Naive thymus-derived CD4-positive, alpha-beta T cell (primary cell): ENCODE measurements at regions of chr17 and their contacts with region 1.

Region 1: DNA sequence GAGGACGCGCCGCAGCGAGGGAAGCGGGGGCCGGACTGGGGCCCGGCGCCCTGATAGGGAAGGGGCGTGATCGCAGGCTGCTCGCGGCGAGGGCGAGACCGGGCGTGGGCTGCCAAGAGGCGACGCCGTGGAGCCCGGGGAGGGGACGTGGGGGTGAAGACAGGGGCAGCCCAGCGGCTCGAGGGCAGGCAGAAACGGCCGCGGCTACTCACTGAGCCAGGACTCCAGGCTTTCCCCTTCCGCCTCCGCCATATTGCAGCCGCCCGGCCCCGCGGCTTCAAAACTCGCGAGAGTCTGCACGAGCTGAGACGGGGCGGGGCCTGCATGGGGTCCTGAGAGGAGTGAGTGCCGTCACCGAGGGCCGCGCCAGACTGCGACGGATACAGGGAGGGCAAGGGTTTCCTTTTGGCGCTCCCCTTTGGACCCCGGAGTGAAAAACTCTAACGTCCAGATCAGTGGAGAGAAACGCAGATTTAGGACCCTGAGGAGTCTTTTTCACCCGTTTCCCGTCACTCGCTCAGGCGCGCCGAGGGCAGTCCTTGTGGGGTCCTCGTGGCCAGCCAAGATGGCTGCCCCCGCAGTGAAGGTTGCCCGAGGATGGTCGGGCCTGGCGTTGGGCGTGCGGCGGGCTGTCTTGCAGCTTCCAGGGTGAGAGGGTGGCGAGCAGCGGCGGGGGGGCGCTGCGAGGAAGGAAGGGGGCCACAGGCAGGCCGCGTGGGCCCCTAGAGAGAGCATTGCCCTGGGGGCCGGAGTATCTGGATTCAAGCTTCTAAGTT is at the starts of genes GGA3 and MRPS7:
- DNase-seq: peak; percentile 94 to 98 (median 96)
- ATAC-seq: peak; percentile 97
- H3K4me3 ChIP-seq: peak within 1 kb of the TSS; percentile 98
- H3K4me3 Mint-ChIP-seq: peak within 1 kb of the TSS; percentile 94 to 100 (median 97)
- H3K27ac ChIP-seq: peak within 1 kb of the TSS; percentile 99
- H3K27ac Mint-ChIP-seq: peak within 1 kb of the TSS; percentile 100
- H3K4me1 ChIP-seq: peaks cover 23% of the 10 kb centered on the region in 2 donors
- H3K4me1 Mint-ChIP-seq: peaks cover 40 to 65% (median 62%) of the 10 kb centered on the region in 7 donors
- H3K27me3 ChIP-seq: no peaks in the 10 kb centered on the region
- H3K27me3 Mint-ChIP-seq: no peaks in the 10 kb centered on the region
- total RNA-seq, gene GGA3: 79.6 to 128 (median 87.4) TPM
- total RNA-seq, gene MRPS7: 29.2 to 70.1 (median 34.4) TPM

Region 2: GRCh38 chr17:74987418-74987908 is 274.1 kb before region 1 on chr17 and contains the start of gene CDR2L:
- CTCF ChIA-PET with region 1: no interaction called
- POLR2A ChIA-PET with region 1: no interaction called
- intact Hi-C with region 1: loop called in 1 of 2 experiments (anchors 10 kb)
- DNase-seq: peak; percentile 87 to 94 (median 90)
- ATAC-seq: peak; percentile 98
- H3K4me3 ChIP-seq: peak within 1 kb of the TSS; percentile 44
- H3K4me3 Mint-ChIP-seq: peak within 1 kb of the TSS; percentile 84 to 94 (median 89)
- H3K27ac ChIP-seq: peak within 1 kb of the TSS; percentile 8
- H3K27ac Mint-ChIP-seq: peak within 1 kb of the TSS in 8 of 9 donors; percentile 10 to 83 (median 66)
- H3K4me1 ChIP-seq: peaks cover 6 to 14% of the 10 kb centered on the region in 2 donors
- H3K4me1 Mint-ChIP-seq: peaks cover 5 to 15% (median 10%) of the 10 kb centered on the region in 7 donors
- H3K27me3 ChIP-seq: no peaks in the 10 kb centered on the region
- H3K27me3 Mint-ChIP-seq: peaks cover 0 to 59% (median 0%) of the 10 kb centered on the region in 5 donors
- total RNA-seq, gene CDR2L: 0.08 to 0.17 (median 0.16) TPM in 3 of 5 experiments, not detected in the others

Region 3: DNA sequence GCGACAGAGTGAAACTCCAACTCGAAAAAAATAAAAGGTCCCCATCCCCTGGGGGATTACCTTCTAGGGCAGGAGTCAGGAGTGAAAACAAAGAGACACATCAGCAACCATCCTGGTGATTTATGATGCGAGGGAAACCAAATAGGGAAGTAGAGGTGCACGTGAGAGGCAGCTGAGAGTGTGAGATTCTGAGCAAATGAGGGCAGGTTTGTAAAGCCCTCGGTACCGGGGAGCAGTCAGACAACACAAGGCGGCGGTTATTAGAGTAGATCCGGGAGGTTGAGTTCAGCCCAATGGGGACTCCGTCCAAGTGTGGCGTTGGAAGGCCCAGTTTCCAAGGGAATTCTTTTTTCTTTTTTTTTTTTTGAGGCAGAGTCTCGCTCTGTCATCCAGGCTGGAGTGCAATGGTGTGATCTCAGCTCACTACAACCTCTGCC is 159.1 kb before region 1 on chr17:
- CTCF ChIA-PET with region 1: no interaction called
- POLR2A ChIA-PET with region 1: no interaction called
- intact Hi-C with region 1: no loop called
- DNase-seq: no peak
- ATAC-seq: peak; percentile 74
- H3K4me3 ChIP-seq: no peak overlapping the region
- H3K4me3 Mint-ChIP-seq: peak overlapping the region in 1 of 10 donors; percentile 18
- H3K27ac ChIP-seq: no peak overlapping the region
- H3K27ac Mint-ChIP-seq: peak overlapping the region in 4 of 9 donors; percentile 15 to 70 (median 36)
- H3K4me1 ChIP-seq: no peaks in the 10 kb centered on the region
- H3K4me1 Mint-ChIP-seq: peaks cover 0 to 8% (median 0%) of the 10 kb centered on the region in 7 donors
- H3K27me3 ChIP-seq: no peaks in the 10 kb centered on the region
- H3K27me3 Mint-ChIP-seq: no peaks in the 10 kb centered on the region

Region 4: GRCh38 chr17:75154195-75155106 is 107.1 kb before region 1 on chr17 and contains the start of gene JPT1:
- CTCF ChIA-PET with region 1: no interaction called
- POLR2A ChIA-PET with region 1: interaction called, 3 read pairs
- intact Hi-C with region 1: loop called in 1 of 2 experiments (anchors 1 kb)
- DNase-seq: peak; percentile 82 to 98 (median 96)
- ATAC-seq: peak; percentile 100
- H3K4me3 ChIP-seq: peak within 1 kb of the TSS; percentile 84
- H3K4me3 Mint-ChIP-seq: peak within 1 kb of the TSS; percentile 88 to 98 (median 94)
- H3K27ac ChIP-seq: peak within 1 kb of the TSS; percentile 80
- H3K27ac Mint-ChIP-seq: peak within 1 kb of the TSS; percentile 78 to 96 (median 92)
- H3K4me1 ChIP-seq: peaks cover 0 to 18% of the 10 kb centered on the region in 2 donors
- H3K4me1 Mint-ChIP-seq: peaks cover 11 to 39% (median 36%) of the 10 kb centered on the region in 7 donors
- H3K27me3 ChIP-seq: no peaks in the 10 kb centered on the region
- H3K27me3 Mint-ChIP-seq: no peaks in the 10 kb centered on the region
- total RNA-seq, gene JPT1: 12.3 to 227 (median 29.3) TPM

Region 5: GRCh38 chr17:75205037-75205792 is 56.3 kb before region 1 on chr17 and contains the start of gene NUP85:
- CTCF ChIA-PET with region 1: interaction called, 4 read pairs
- POLR2A ChIA-PET with region 1: interaction called, 13 read pairs
- intact Hi-C with region 1: loop called (anchors 1 kb)
- DNase-seq: peak; percentile 87 to 97 (median 93)
- ATAC-seq: peak; percentile 96
- H3K4me3 ChIP-seq: peak within 1 kb of the TSS; percentile 82
- H3K4me3 Mint-ChIP-seq: peak within 1 kb of the TSS; percentile 91 to 98 (median 96)
- H3K27ac ChIP-seq: peak within 1 kb of the TSS; percentile 95
- H3K27ac Mint-ChIP-seq: peak within 1 kb of the TSS; percentile 94 to 100 (median 99)
- H3K4me1 ChIP-seq: peaks cover 0 to 5% of the 10 kb centered on the region in 2 donors
- H3K4me1 Mint-ChIP-seq: peaks cover 12 to 47% (median 26%) of the 10 kb centered on the region in 7 donors
- H3K27me3 ChIP-seq: no peaks in the 10 kb centered on the region
- H3K27me3 Mint-ChIP-seq: no peaks in the 10 kb centered on the region
- total RNA-seq, gene NUP85: 96.3 to 143 (median 99.2) TPM

Region 6: GRCh38 chr17:75456417-75457046 is 195.0 kb after region 1 on chr17 and contains the start of gene TMEM94:
- CTCF ChIA-PET with region 1: interaction called, 4 read pairs
- POLR2A ChIA-PET with region 1: interaction called, 10 read pairs
- intact Hi-C with region 1: loop called (anchors 1 to 2 kb)
- DNase-seq: peak; percentile 70 to 93 (median 89)
- ATAC-seq: peak; percentile 98
- H3K4me3 ChIP-seq: peak within 1 kb of the TSS; percentile 99
- H3K4me3 Mint-ChIP-seq: peak within 1 kb of the TSS; percentile 92 to 99 (median 94)
- H3K27ac ChIP-seq: peak within 1 kb of the TSS; percentile 74
- H3K27ac Mint-ChIP-seq: peak within 1 kb of the TSS; percentile 84 to 99 (median 93)
- H3K4me1 ChIP-seq: peaks cover 10% of the 10 kb centered on the region in 2 donors
- H3K4me1 Mint-ChIP-seq: peaks cover 25 to 42% (median 34%) of the 10 kb centered on the region in 7 donors
- H3K27me3 ChIP-seq: no peaks in the 10 kb centered on the region
- H3K27me3 Mint-ChIP-seq: no peaks in the 10 kb centered on the region
- total RNA-seq, gene TMEM94: 74.1 to 97.2 (median 81.9) TPM

Region 7: DNA sequence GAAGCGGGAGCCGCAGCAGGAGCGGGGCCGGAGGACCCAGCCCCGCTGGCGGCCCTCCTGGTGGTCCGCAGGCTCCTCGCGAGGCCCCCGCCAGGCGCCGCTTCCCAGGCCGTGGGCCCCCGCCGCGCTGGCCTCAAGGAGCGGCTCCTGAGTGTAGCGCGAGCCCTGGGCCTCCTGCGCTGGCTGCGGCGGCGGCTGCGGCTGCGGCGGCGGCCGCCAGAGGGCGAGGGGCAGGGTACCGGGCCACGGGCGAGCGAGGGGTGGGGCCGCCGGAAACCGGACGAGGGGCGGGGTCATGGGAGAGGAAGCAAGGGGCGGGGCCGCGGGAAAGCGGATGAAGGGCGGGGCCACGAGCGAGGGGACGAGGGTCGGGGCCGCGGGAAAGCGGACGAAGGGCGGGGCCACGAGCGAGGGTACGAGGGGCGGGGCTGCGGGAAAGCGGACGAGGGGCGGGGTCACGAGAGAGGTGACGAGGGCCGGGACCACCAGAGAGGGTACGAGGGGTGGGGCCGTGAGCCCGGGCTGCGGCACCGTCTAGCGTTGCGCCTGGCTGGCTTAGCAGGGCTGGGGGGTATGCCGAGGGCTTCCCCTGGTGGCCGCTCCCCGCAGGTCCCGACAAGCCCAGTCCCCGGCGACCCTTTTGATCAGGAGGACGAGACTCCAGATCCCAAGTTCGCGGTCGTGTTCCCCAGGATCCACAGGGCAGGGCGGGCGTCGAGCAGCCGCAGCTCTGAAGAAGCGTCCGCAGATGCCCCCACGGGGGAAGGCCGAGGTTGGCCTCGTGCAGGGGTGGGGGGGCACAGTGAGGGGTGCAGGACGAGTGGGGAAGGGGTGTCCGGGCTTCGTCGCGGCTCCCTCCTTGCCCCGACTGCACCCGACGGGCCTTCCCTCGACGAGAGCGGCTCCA is 327.7 kb after region 1 on chr17:
- CTCF ChIA-PET with region 1: no interaction called
- POLR2A ChIA-PET with region 1: no interaction called
- intact Hi-C with region 1: loop called (anchors 2 to 10 kb)
- DNase-seq: peak; percentile 81 to 98 (median 93)
- ATAC-seq: peak; percentile 94
- H3K4me3 ChIP-seq: peak overlapping the region; percentile 53
- H3K4me3 Mint-ChIP-seq: peak overlapping the region; percentile 57 to 95 (median 82)
- H3K27ac ChIP-seq: peak overlapping the region; percentile 83
- H3K27ac Mint-ChIP-seq: peak overlapping the region in 6 of 9 donors; percentile 59 to 95 (median 86)
- H3K4me1 ChIP-seq: peaks cover 0 to 2% of the 10 kb centered on the region in 2 donors
- H3K4me1 Mint-ChIP-seq: peaks cover 0 to 17% (median 11%) of the 10 kb centered on the region in 7 donors
- H3K27me3 ChIP-seq: no peaks in the 10 kb centered on the region
- H3K27me3 Mint-ChIP-seq: peaks cover 0 to 31% (median 0%) of the 10 kb centered on the region in 5 donors